Common myeloid progenitor, CD34-positive (primary cell): ENCODE measurements at regions of chr2 and their contacts with region 1.

Region 1: DNA sequence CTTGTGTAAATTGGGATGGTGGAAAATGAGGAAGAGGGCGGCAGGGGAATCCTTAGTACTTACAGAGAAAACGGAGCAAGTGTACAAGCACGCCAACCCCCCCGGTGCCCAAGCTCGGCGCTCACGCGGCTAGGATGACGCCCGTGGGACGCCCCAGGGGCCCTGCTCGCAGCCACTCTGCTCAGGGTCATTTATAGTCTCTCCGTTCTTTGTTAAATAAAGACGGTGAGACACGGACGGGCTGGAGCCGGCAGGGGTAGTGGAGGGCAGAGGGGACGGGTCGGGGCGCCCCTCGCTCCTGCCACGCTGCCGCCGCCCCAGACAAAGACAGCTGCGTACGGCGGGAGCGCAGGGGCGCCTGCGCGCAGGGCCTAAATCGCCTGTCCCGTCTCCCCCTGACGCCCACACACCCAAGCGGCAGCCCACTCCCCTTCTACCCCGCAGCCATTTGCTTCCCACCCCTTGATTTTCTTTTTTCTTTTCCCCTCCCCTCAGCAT is 37.8 kb downstream of the PCBP1 start:
- DNase-seq: peak; percentile 69 to 84 (median 80)
- H3K4me3 ChIP-seq: peak overlapping the region; percentile 30 to 83 (median 70)
- H3K27ac ChIP-seq: peak overlapping the region; percentile 85 to 92
- H3K4me1 ChIP-seq: peaks cover 29 to 80% (median 59%) of the 10 kb centered on the region in 4 experiments
- H3K27me3 ChIP-seq: no peaks in the 10 kb centered on the region

Region 2: GRCh38 chr2:69997015-69997830 is 127.8 kb before region 1 on chr2:
- CTCF ChIA-PET with region 1: no interaction called
- POLR2A ChIA-PET with region 1: no interaction called
- DNase-seq: peak in 2 of 3 donors; percentile 63 to 68
- H3K4me3 ChIP-seq: no peak overlapping the region
- H3K27ac ChIP-seq: peak overlapping the region in 1 of 2 experiments; percentile 39
- H3K4me1 ChIP-seq: peaks cover 0 to 7% (median 2%) of the 10 kb centered on the region in 4 experiments
- H3K27me3 ChIP-seq: no peaks in the 10 kb centered on the region

Region 3: DNA sequence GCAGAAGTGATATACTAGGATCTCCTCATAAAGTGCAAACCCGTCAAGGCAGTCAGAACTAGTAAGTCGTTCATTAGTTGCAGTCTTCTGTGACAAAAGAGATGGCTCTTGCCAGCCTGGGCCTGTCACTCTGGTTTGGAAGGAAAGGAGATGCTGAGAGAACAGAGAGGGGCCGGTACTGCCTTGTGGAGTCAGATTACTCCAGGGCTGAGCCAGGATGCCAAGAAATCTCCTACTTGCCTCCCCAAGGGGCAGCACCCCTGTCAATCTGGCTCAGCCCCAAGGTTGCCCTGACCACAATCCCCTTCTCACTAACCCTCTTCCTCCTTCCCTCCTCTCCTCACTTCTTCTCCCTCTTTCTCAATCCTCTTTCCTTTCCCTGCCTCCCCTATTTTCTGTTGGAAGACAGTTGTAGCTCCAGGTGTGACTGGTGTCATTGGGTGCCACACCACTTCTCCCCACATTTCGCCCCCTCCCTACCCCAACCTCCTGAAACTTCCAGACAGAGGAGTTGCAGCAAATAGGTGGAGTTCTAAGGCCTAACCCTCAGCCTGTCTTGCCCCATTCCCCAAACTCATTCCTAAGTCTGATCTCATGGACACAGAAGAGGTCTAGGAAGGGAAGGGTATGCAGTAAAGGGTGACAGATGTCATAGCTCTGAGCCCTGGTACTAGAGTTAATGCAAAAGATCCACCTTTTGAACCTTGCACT is 100.6 kb before region 1 on chr2:
- CTCF ChIA-PET with region 1: no interaction called
- POLR2A ChIA-PET with region 1: no interaction called
- DNase-seq: no peak
- H3K4me3 ChIP-seq: no peak overlapping the region
- H3K27ac ChIP-seq: no peak overlapping the region
- H3K4me1 ChIP-seq: peaks cover under 1 to 6% (median 5%) of the 10 kb centered on the region in 4 experiments
- H3K27me3 ChIP-seq: no peaks in the 10 kb centered on the region

Region 4: GRCh38 chr2:70094978-70095719 is 29.9 kb before region 1 on chr2:
- CTCF ChIA-PET with region 1: interaction called, 19 read pairs
- POLR2A ChIA-PET with region 1: interaction called, 10 read pairs
- DNase-seq: peak; percentile 93 to 98 (median 97)
- H3K4me3 ChIP-seq: peak overlapping the region in 6 of 7 experiments; percentile 11 to 49 (median 26)
- H3K27ac ChIP-seq: peak overlapping the region; percentile 51 to 75
- H3K4me1 ChIP-seq: peaks cover 20 to 43% (median 31%) of the 10 kb centered on the region in 4 experiments
- H3K27me3 ChIP-seq: no peaks in the 10 kb centered on the region

Region 5: DNA sequence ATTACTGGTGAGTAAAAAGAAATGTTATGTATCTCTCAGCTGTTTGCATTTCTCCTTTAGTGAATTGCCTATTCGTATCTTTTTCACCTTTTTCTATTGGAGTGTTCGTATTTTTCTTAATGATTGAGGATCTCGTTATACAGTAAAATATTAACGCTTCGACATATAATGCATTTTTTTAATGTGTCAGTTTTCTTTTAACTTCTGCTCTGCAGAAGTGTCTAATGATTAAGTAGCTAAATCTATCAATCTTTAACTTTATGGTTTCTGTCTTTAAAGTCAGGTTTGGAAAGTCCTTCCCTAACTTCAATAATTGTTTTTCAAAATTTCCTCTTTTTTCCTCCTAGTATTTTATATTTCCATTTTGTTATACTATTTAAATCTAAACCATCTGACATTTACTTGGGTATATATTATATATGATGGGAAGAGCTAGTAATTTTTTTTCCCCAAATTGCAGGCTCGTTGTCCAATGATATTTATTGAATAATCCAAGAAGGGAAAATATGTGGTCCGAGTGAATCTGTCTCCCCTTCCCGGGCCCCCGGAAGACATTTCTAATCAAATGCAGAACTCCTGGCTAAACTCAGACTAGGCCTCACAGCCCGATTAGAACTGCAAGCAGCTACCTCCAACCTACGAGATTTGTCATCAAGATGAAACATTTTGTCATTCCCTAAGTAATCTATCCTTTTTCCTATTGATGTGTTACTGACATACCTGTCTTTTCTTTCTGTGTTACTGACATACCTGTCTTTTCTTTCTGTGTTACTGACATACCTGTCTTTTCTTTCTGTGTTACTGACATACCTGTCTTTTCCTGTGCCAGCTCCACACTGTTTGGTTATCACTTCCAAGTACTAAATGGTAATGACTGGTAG is 20.6 kb before region 1 on chr2:
- CTCF ChIA-PET with region 1: interaction called, 10 read pairs
- POLR2A ChIA-PET with region 1: interaction called, 6 read pairs
- DNase-seq: peak; percentile 72 to 81 (median 76)
- H3K4me3 ChIP-seq: peak overlapping the region in 5 of 7 experiments; percentile 32 to 49 (median 46)
- H3K27ac ChIP-seq: peak overlapping the region; percentile 46 to 76
- H3K4me1 ChIP-seq: peaks cover 21 to 45% (median 33%) of the 10 kb centered on the region in 4 experiments
- H3K27me3 ChIP-seq: no peaks in the 10 kb centered on the region

Region 6: GRCh38 chr2:70142590-70143313 is 17.7 kb after region 1 on chr2:
- CTCF ChIA-PET with region 1: interaction called, 28 read pairs
- POLR2A ChIA-PET with region 1: interaction called, 13 read pairs
- DNase-seq: peak; percentile 99 to 100 (median 99)
- H3K4me3 ChIP-seq: peak overlapping the region in 6 of 7 experiments; percentile 49 to 79 (median 68)
- H3K27ac ChIP-seq: peak overlapping the region; percentile 85 to 97
- H3K4me1 ChIP-seq: peaks cover 10 to 41% (median 26%) of the 10 kb centered on the region in 4 experiments
- H3K27me3 ChIP-seq: no peaks in the 10 kb centered on the region